ENCODE measurements at regions of chr2 and their contacts with region 1.

Region 1: GRCh38 chr2:38947240-38948239 is 57.9 kb downstream of the ARHGEF33 start:
- DNase-seq: peak; percentile 9
- H3K4me3 ChIP-seq: no peak overlapping the region
- CTCF ChIP-seq: peak; percentile 77

Region 2: GRCh38 chr2:38825956-38826355 is 121.6 kb before region 1 on chr2:
- CTCF ChIA-PET with region 1: no interaction called
- POLR2A ChIA-PET with region 1: no interaction called
- DNase-seq: no peak
- H3K4me3 ChIP-seq: no peak overlapping the region
- CTCF ChIP-seq: no peak

Region 3: GRCh38 chr2:38935568-38936172 is 11.9 kb before region 1 on chr2:
- CTCF ChIA-PET with region 1: interaction called, 23 read pairs
- POLR2A ChIA-PET with region 1: no interaction called
- DNase-seq: peak; percentile 17
- H3K4me3 ChIP-seq: no peak overlapping the region
- CTCF ChIP-seq: no peak

Region 4: DNA sequence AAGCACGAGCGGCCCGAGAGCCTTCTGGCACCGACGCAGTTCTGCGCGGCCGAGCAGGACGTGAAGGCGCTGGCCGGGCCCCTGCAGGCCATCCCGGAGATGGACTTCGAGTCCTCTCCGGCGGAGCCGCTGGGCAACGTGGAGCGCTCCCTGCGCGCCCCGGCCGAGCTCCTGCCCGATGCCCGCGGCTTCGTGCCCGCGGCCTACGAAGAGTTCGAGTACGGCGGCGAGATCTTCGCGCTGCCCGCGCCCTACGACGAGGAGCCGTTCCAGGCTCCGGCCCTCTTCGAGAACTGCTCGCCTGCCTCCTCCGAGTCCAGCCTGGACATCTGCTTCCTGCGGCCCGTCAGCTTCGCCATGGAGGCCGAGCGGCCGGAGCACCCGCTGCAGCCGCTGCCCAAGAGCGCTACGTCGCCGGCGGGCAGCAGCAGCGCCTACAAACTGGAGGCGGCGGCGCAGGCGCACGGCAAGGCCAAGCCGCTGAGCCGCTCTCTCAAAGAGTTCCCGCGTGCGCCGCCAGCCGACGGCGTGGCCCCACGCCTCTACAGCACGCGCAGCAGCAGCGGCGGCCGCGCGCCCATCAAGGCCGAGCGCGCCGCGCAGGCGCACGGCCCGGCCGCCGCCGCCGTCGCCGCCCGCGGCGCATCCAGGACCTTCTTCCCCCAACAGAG is 12.5 kb after region 1 on chr2:
- CTCF ChIA-PET with region 1: interaction called, 23 read pairs
- POLR2A ChIA-PET with region 1: no interaction called
- DNase-seq: peak; percentile 23
- H3K4me3 ChIP-seq: peak overlapping the region; percentile 53
- CTCF ChIP-seq: peak; percentile 28